ENCODE measurements at regions of chr5 and their contacts with region 1.

Region 1: DNA sequence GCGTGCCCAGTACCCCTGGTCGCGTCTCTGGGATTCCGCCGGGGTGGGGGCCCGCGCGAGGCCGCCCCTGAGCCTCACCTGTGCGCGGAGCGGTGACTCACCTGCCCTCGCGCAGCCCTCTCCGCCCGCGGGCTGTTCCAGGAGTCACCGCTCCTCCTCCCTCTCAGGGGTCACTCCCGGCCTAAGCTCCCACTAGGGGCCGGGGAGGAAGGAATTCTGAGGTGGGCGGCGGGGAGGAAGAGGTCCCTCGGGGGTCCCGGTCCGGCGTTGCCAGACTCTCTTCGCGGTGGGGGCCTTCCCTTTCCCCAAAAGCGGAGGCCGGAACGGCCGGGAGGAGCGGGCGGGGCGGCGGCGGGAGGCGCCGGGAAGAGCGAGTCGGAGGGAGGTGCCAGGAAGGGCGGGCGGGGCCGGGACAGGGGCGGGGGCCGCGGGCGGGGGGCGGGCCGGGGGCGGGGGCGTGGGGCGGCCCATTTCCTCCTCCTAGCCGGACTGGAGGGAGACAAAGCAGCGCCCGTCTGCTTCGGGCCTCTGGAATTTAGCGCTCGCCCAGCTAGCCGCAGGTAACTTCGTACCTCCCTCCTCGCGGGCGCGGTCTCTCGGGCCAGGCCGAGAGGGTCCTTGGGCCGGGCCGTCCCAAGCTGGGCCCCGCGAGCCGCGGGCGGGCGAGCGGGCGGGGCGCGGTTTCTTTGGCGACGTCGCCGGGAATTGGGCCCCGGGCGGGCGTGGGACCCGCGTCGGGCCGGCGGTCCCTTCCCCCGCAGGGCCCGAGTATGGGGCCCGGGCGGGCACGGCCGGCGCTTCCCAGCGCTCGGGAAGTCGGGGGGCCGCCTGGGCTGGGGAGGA is at the start of gene CTNNA1:
- DNase-seq: peak; percentile 89
- H3K4me3 Mint-ChIP-seq: peak within 1 kb of the TSS; percentile 87
- H3K27ac Mint-ChIP-seq: peak within 1 kb of the TSS; percentile 94
- H3K4me1 Mint-ChIP-seq: peaks cover 49% of the 10 kb centered on the region
- H3K27me3 Mint-ChIP-seq: no peaks in the 10 kb centered on the region
- CTCF ChIP-seq: no peak
- total RNA-seq, gene CTNNA1: 519 and 638 TPM in 2 replicates

Region 2: GRCh38 chr5:138491669-138492559 is 261.3 kb before region 1 on chr5:
- CTCF ChIA-PET with region 1: no interaction called
- POLR2A ChIA-PET with region 1: no interaction called
- intact Hi-C with region 1: no loop called
- DNase-seq: peak; percentile 97
- H3K4me3 Mint-ChIP-seq: peak overlapping the region; percentile 94
- H3K27ac Mint-ChIP-seq: peak overlapping the region; percentile 70
- H3K4me1 Mint-ChIP-seq: peaks cover 45% of the 10 kb centered on the region
- H3K27me3 Mint-ChIP-seq: no peaks in the 10 kb centered on the region
- CTCF ChIP-seq: no peak

Region 3: DNA sequence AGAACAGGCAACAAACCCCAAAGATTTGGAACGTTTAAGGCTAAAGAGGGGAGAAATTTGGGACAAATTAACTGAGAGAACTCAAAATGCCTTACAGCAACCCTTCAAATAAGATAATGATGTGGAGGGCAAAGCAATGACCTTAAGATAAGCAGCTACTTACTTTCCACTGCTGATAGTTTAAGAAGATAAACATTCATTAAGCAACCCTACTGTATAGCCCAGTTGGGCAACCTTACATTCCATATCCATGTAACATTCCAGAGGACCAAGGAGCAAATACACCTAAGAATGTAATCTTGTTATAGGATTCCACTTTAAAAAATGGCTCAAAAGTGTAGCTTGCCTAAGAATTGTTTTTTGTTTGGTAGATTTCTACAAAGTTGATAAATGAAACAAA is 225.0 kb before region 1 on chr5:
- CTCF ChIA-PET with region 1: no interaction called
- POLR2A ChIA-PET with region 1: no interaction called
- intact Hi-C with region 1: no loop called
- DNase-seq: peak; percentile 41
- H3K4me3 Mint-ChIP-seq: peak overlapping the region; percentile 1
- H3K27ac Mint-ChIP-seq: no peak overlapping the region
- H3K4me1 Mint-ChIP-seq: peaks cover 49% of the 10 kb centered on the region
- H3K27me3 Mint-ChIP-seq: no peaks in the 10 kb centered on the region
- CTCF ChIP-seq: no peak

Region 4: DNA sequence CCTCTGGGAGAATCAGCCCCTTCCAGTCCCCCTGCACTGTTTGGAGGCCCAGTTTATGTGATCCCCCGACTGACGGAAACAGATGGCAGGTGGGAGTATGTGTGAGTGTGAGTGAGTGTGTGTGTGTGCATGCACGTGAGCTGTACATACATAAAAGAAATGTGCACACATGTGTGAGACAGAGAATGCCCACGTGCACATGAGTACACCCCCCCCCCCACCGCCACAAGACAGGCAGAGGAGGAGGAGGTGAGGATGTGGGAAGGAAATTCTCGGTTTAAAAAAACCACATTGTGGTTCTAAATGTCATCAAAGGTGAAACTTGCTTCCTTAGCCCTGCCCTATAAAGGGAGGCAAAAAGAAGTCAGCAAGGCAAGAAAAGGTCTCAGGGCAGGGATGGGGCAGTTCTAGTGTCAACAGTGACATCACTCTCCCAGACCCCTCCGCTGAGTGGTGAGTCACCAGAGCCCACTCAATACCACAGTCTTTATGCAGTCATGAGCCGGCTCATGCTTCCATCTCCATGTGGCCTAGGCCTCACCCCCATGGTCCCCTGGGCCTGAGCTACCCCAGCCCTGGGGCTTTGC is 98.8 kb before region 1 on chr5:
- CTCF ChIA-PET with region 1: interaction called, 10 read pairs
- POLR2A ChIA-PET with region 1: interaction called, 4 read pairs
- intact Hi-C with region 1: loop called (anchors 2 kb)
- DNase-seq: no peak
- H3K4me3 Mint-ChIP-seq: no peak overlapping the region
- H3K27ac Mint-ChIP-seq: no peak overlapping the region
- H3K4me1 Mint-ChIP-seq: no peaks in the 10 kb centered on the region
- H3K27me3 Mint-ChIP-seq: no peaks in the 10 kb centered on the region
- CTCF ChIP-seq: no peak

Region 5: GRCh38 chr5:138709202-138709601 is 44.0 kb before region 1 on chr5:
- CTCF ChIA-PET with region 1: no interaction called
- POLR2A ChIA-PET with region 1: no interaction called
- intact Hi-C with region 1: no loop called
- DNase-seq: no peak
- H3K4me3 Mint-ChIP-seq: no peak overlapping the region
- H3K27ac Mint-ChIP-seq: no peak overlapping the region
- H3K4me1 Mint-ChIP-seq: no peaks in the 10 kb centered on the region
- H3K27me3 Mint-ChIP-seq: no peaks in the 10 kb centered on the region
- CTCF ChIP-seq: no peak

Region 6: GRCh38 chr5:138725138-138725833 is 27.9 kb before region 1 on chr5:
- CTCF ChIA-PET with region 1: interaction called, 5 read pairs
- POLR2A ChIA-PET with region 1: interaction called, 27 read pairs
- intact Hi-C with region 1: no loop called
- DNase-seq: peak; percentile 100
- H3K4me3 Mint-ChIP-seq: peak overlapping the region; percentile 51
- H3K27ac Mint-ChIP-seq: peak overlapping the region; percentile 96
- H3K4me1 Mint-ChIP-seq: peaks cover 39% of the 10 kb centered on the region
- H3K27me3 Mint-ChIP-seq: no peaks in the 10 kb centered on the region
- CTCF ChIP-seq: peak; percentile 55

Region 7: GRCh38 chr5:138772986-138773594 is 19.9 kb after region 1 on chr5:
- CTCF ChIA-PET with region 1: interaction called, 6 read pairs
- POLR2A ChIA-PET with region 1: interaction called, 13 read pairs
- intact Hi-C with region 1: no loop called
- DNase-seq: no peak
- H3K4me3 Mint-ChIP-seq: no peak overlapping the region
- H3K27ac Mint-ChIP-seq: peak overlapping the region; percentile 4
- H3K4me1 Mint-ChIP-seq: peaks cover 18% of the 10 kb centered on the region
- H3K27me3 Mint-ChIP-seq: no peaks in the 10 kb centered on the region
- CTCF ChIP-seq: no peak

Region 8: GRCh38 chr5:138844812-138845513 is 91.8 kb after region 1 on chr5:
- CTCF ChIA-PET with region 1: no interaction called
- POLR2A ChIA-PET with region 1: interaction called, 15 read pairs
- intact Hi-C with region 1: no loop called
- DNase-seq: peak; percentile 88
- H3K4me3 Mint-ChIP-seq: peak overlapping the region; percentile 7
- H3K27ac Mint-ChIP-seq: peak overlapping the region; percentile 89
- H3K4me1 Mint-ChIP-seq: peaks cover 42% of the 10 kb centered on the region
- H3K27me3 Mint-ChIP-seq: no peaks in the 10 kb centered on the region
- CTCF ChIP-seq: no peak

Region 9: DNA sequence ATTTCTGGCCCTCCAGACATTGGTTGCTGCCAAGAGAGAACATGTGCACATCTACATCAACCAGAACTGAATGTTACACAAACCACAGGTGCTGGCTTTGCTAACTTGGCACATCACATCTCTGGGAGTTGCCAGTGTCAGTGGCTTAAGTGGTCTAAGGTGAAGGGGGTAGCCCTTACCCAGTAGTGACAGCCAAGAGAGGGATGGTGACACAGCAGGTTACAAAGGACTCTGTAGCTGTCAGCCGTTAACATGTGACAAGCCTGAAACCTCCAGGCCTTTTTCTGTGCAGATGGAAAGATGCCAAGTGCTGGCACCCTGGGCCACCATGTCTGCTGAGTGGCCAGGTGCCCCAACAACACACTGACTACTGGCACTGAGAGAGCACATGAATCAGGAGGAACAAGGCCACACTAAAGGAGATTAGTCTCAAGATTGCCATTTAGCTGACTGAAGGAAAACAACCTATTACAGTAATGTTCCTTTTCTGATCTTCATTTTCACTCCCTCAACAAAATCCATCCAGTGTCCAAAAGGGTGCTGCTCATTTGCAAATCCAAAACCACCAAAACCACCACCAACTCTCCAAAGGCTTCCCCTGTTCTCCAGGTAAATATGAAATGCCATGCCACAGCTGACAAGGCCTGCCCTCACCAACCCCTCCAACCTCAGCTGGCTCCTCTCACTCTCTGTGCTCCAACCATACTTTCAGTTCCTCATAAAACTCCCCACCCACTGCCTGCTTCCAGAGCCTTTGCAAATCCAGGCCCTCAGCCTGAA is 424.8 kb after region 1 on chr5:
- CTCF ChIA-PET with region 1: no interaction called
- POLR2A ChIA-PET with region 1: no interaction called
- intact Hi-C with region 1: no loop called
- DNase-seq: peak; percentile 33
- H3K4me3 Mint-ChIP-seq: no peak overlapping the region
- H3K27ac Mint-ChIP-seq: peak overlapping the region; percentile 63
- H3K4me1 Mint-ChIP-seq: peaks cover 49% of the 10 kb centered on the region
- H3K27me3 Mint-ChIP-seq: no peaks in the 10 kb centered on the region
- CTCF ChIP-seq: no peak